ENCODE measurements at regions of chr2 and their contacts with region 1.

Region 1: GRCh38 chr2:219509780-219510511 is 4.3 kb upstream of the ASIC4 start:
- DNase-seq: peak in 1 of 2 donors; percentile 76
- H3K4me3 ChIP-seq: peak overlapping the region in 1 of 2 donors; percentile 63
- H3K27ac ChIP-seq: no peak overlapping the region
- H3K4me1 ChIP-seq: peaks cover 5 to 25% of the 10 kb centered on the region in 2 donors
- H3K27me3 ChIP-seq: peaks cover 27% of the 10 kb centered on the region
- CTCF ChIP-seq: peak; percentile 66 to 77 (median 68)

Region 2: GRCh38 chr2:219530048-219530963 is 20.4 kb after region 1 on chr2:
- intact Hi-C with region 1: loop called (anchors 1 kb)
- DNase-seq: peak in 1 of 2 donors; percentile 88
- H3K4me3 ChIP-seq: peak overlapping the region in 1 of 2 donors; percentile 55
- H3K27ac ChIP-seq: no peak overlapping the region
- H3K4me1 ChIP-seq: no peaks in the 10 kb centered on the region
- H3K27me3 ChIP-seq: no peaks in the 10 kb centered on the region
- CTCF ChIP-seq: peak; percentile 97 to 99 (median 98)